GM10248 (cell line): ENCODE measurements at regions of chr1 and their contacts with region 1.

Region 1: GRCh38 chr1:52332411-52332810 is 33.6 kb downstream of the CC2D1B start:
- DNase-seq: no peak
- CTCF ChIP-seq: no peak

Region 2: DNA sequence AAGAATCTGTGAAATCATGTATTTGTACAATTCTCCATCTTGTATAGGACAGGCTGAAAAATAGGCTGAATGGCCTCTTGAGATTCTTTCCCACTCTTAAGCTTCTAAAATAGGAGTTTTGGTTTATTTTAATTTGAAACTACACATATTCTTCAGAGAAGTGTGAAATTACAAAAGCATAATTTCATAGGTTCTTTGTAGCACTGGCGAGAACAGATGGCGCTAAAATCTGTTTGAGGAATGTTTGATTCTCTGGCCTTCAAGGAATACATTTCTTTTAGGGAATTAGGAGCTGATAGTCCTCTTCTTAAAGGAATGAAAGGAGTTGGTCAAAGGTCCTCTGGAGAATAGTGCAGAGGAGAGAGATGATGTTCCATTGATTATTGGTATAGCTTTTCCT is 11.3 kb before region 1 on chr1:
- CTCF ChIA-PET with region 1: interaction called, 10 read pairs
- POLR2A ChIA-PET with region 1: no interaction called
- DNase-seq: no peak
- CTCF ChIP-seq: no peak